ENCODE measurements at regions of chr14 and their contacts with region 1.

Region 1: GRCh38 chr14:36373982-36374673 is 53.7 kb upstream of the MBIP start:
- DNase-seq: peak; percentile 21 to 82 (median 60)
- H3K4me3 ChIP-seq: no peak overlapping the region
- H3K27ac ChIP-seq: no peak overlapping the region
- H3K27me3 ChIP-seq: peaks cover 0 to 7% (median 0%) of the 10 kb centered on the region in 45 donors
- CTCF ChIP-seq: peak; percentile 57 to 95 (median 85)

Region 2: GRCh38 chr14:36207500-36207899 is 166.6 kb before region 1 on chr14:
- intact Hi-C with region 1: loop called in 1 of 2 experiments (anchors 10 kb)
- DNase-seq: no peak
- H3K4me3 ChIP-seq: no peak overlapping the region
- H3K27ac ChIP-seq: no peak overlapping the region
- H3K27me3 ChIP-seq: peaks cover 0 to 2% (median 0%) of the 10 kb centered on the region in 45 donors
- CTCF ChIP-seq: peak in 54 of 56 donors; percentile 8 to 70 (median 47)

Region 3: GRCh38 chr14:36626151-36626550 is 252.0 kb after region 1 on chr14:
- intact Hi-C with region 1: no loop called
- DNase-seq: no peak
- H3K4me3 ChIP-seq: no peak overlapping the region
- H3K27ac ChIP-seq: no peak overlapping the region
- H3K27me3 ChIP-seq: peaks cover 0 to 64% (median 20%) of the 10 kb centered on the region in 45 donors
- CTCF ChIP-seq: no peak

Region 4: GRCh38 chr14:36738269-36738668 is 364.1 kb after region 1 on chr14:
- intact Hi-C with region 1: no loop called
- DNase-seq: no peak
- H3K4me3 ChIP-seq: no peak overlapping the region
- H3K27ac ChIP-seq: no peak overlapping the region
- H3K27me3 ChIP-seq: peaks cover 0 to 40% (median 3%) of the 10 kb centered on the region in 45 donors
- CTCF ChIP-seq: no peak

Region 5: GRCh38 chr14:36941783-36942521 is 567.8 kb after region 1 on chr14:
- intact Hi-C with region 1: no loop called
- DNase-seq: peak; percentile 31 to 84 (median 70)
- H3K4me3 ChIP-seq: no peak overlapping the region
- H3K27ac ChIP-seq: no peak overlapping the region
- H3K27me3 ChIP-seq: peaks cover 0 to 25% (median 0%) of the 10 kb centered on the region in 45 donors
- CTCF ChIP-seq: peak; percentile 69 to 97 (median 88)